ENCODE measurements at regions of chr17 and their contacts with region 1.

Region 1: DNA sequence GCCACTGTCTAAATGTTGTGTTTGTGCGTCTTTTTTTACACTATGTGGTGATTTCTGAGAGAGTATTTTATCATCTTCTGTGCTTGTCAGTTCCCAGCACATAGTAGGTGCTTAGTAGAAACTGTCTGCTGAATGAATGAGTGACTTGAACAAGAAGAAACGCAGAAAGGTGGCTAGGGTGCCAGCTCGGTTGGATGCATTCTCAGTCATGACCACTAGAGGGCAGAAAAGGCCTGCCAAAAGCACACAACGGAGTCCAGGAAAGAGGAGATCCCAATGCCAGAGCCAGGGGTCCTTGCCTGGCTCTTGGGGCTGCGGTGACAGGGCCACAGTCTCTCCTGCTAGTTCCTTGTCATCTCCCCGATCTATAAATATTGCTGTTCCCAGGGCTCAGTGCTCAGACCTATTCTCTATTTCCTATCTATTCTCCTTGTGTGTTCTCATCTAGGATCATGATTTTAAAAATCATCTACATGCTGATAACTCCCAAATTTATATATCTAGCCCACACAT is 57.3 kb upstream of the CCL1 start:
- DNase-seq: no peak
- H3K4me3 ChIP-seq: no peak overlapping the region
- H3K27me3 ChIP-seq: peaks cover 14% of the 10 kb centered on the region
- CTCF ChIP-seq: peak; percentile 91

Region 2: GRCh38 chr17:34398990-34399389 is 21.3 kb before region 1 on chr17:
- CTCF ChIA-PET with region 1: interaction called, 13 read pairs
- POLR2A ChIA-PET with region 1: no interaction called
- DNase-seq: no peak
- H3K4me3 ChIP-seq: no peak overlapping the region
- H3K27me3 ChIP-seq: peaks cover 1% of the 10 kb centered on the region; the same call in 1 of the 2 replicates
- CTCF ChIP-seq: no peak

Region 3: GRCh38 chr17:34637548-34638525 is 217.5 kb after region 1 on chr17:
- CTCF ChIA-PET with region 1: interaction called, 21 read pairs
- POLR2A ChIA-PET with region 1: no interaction called
- DNase-seq: peak; percentile 2
- H3K4me3 ChIP-seq: peak overlapping the region; percentile 23
- H3K27me3 ChIP-seq: peaks cover 8% of the 10 kb centered on the region
- CTCF ChIP-seq: peak; percentile 96

Measured in BJ (cell line).